ENCODE measurements at regions of chr5 and their contacts with region 1.

Region 1: DNA sequence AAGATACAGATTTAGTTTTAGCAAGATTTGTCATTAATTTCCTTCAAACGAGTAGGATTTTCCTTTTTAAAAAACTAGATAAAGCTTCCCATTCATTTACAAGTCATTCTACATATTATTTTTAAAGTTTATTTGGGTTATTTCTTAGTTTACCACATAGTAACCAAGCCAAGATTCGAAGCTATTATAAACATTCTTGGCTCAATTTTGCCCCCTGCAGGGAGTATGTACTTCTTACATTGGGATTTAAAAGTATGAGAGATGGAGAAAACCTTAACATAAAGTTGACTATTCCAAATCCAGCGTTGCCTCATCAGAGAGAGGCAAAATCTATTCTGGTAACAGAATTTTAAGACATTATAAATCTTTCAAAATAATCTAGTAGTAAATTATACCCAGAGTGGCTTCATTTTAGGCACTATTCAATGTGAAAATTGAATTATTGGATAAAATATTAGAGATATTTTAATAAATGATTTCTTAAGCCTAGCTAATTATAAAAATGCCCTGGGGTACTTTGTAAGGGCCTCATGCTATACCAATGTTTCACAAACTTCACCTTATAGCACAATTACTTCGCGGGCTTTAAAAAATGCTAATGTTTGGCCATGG is 39.1 kb downstream of the FBN2 start:
- DNase-seq: peak; percentile 54
- H3K4me3 ChIP-seq: no peak overlapping the region
- H3K27ac ChIP-seq: no peak overlapping the region
- H3K27me3 ChIP-seq: no peaks in the 10 kb centered on the region
- CTCF ChIP-seq: peak; percentile 53

Region 2: DNA sequence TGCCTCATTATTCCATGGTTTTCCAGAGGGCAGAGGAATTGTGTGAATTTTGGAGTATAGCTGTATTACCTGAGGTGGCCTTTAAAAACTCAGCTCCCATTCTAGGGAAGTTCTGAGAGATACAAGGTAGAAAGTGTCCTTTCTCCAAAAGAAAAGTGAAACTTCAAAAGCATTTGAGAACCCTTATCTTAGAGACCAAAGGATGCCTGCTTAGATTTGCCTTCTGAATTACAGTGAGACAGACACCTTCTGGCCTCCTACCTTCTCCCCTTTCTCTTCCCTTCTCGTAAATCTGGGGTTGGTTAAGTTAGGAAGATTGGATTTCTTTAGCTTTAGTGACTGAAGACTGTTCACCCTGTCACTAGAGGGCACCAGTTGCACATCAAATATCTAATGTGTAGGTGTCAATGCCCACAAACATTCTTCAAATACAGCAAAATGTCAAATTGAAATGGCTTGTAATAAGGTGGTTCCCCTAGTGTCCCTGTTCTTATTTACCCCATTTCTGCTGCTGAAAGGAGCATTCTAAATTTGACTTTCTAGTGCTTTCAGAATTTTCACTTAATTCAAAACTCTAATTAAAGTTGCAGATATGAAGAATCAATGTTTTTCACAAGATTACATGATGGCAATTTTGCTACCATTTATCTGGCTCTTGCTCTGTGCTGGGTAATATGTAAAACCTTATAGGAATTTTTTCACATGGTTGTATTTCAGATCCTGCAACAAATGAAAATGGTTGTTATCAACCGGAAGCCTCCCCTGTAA is 934.8 kb before region 1 on chr5:
- CTCF ChIA-PET with region 1: interaction called, 10 read pairs
- POLR2A ChIA-PET with region 1: no interaction called
- DNase-seq: peak; percentile 18
- H3K4me3 ChIP-seq: no peak overlapping the region
- H3K27ac ChIP-seq: no peak overlapping the region
- H3K27me3 ChIP-seq: peaks cover 9% of the 10 kb centered on the region
- CTCF ChIP-seq: peak; percentile 59

Region 3: DNA sequence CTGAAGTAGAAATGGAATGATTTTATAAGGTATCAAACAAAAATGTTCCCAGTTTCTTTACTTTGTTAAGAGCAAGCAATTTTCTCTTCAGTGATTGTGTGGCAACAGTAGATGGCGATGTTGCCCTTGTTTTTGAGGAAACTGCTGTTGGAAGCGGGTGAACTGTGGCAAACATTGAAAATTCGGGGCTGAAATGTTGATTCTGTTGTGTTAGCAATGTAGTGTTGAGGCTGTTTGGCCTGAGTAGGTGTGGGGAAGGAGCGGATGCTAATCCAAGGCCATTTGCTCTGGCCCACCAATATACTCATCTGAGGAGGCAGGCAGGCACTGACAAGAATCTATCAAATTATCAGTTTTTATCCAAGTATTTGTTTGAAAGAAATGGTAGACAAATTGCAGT is 285.6 kb before region 1 on chr5:
- CTCF ChIA-PET with region 1: interaction called, 80 read pairs
- POLR2A ChIA-PET with region 1: no interaction called
- DNase-seq: no peak
- H3K4me3 ChIP-seq: no peak overlapping the region
- H3K27ac ChIP-seq: no peak overlapping the region
- H3K27me3 ChIP-seq: peaks cover 3% of the 10 kb centered on the region
- CTCF ChIP-seq: peak; percentile 80

Region 4: DNA sequence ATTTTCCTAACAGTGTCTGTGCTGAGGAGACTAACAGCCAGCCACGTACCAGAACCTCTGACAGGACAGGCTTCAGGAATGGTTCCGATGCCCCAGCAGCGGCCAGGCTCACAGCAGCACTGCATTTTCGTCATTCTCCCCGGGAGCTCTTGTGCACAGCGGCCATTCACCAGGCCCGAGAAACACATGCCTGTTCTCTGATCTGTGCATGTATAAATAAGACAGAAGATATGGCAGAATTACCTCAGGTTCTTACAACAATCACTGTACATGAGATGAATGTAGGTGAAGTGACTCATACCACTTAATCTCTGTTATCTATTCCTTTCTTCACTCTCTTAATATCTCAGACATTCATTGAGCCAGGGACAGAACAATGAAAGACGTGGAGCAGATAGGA is 103.9 kb before region 1 on chr5:
- CTCF ChIA-PET with region 1: no interaction called
- POLR2A ChIA-PET with region 1: no interaction called
- DNase-seq: no peak
- H3K4me3 ChIP-seq: no peak overlapping the region
- H3K27ac ChIP-seq: no peak overlapping the region
- H3K27me3 ChIP-seq: no peaks in the 10 kb centered on the region
- CTCF ChIP-seq: no peak

Region 5: DNA sequence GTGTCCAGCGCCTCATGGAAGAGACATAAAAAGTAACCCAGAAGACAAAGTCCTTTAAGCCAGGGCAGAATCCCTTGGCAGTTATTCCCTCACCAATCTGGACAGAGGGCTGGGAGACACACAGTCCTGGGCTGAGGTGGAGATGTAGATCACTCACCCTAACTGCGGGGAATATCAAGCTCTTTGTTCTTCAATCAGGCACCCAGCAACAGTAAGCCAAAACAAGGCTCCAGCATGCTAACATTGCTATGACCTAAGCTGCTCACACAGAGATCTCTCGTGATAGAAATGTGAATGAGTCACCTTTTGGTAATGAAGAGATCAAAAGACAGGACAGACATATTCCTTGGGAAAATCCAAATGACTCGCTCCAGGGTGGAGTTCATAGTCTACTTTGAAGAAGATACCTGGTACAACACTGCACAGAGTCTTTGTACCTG is 62.2 kb before region 1 on chr5:
- CTCF ChIA-PET with region 1: no interaction called
- POLR2A ChIA-PET with region 1: no interaction called
- DNase-seq: peak; percentile 24
- H3K4me3 ChIP-seq: no peak overlapping the region
- H3K27ac ChIP-seq: no peak overlapping the region
- H3K27me3 ChIP-seq: no peaks in the 10 kb centered on the region
- CTCF ChIP-seq: no peak

Region 6: GRCh38 chr5:128480906-128481633 is 17.9 kb before region 1 on chr5:
- CTCF ChIA-PET with region 1: interaction called, 13 read pairs
- POLR2A ChIA-PET with region 1: no interaction called
- DNase-seq: no peak
- H3K4me3 ChIP-seq: no peak overlapping the region
- H3K27ac ChIP-seq: no peak overlapping the region
- H3K27me3 ChIP-seq: no peaks in the 10 kb centered on the region
- CTCF ChIP-seq: no peak

Region 7: DNA sequence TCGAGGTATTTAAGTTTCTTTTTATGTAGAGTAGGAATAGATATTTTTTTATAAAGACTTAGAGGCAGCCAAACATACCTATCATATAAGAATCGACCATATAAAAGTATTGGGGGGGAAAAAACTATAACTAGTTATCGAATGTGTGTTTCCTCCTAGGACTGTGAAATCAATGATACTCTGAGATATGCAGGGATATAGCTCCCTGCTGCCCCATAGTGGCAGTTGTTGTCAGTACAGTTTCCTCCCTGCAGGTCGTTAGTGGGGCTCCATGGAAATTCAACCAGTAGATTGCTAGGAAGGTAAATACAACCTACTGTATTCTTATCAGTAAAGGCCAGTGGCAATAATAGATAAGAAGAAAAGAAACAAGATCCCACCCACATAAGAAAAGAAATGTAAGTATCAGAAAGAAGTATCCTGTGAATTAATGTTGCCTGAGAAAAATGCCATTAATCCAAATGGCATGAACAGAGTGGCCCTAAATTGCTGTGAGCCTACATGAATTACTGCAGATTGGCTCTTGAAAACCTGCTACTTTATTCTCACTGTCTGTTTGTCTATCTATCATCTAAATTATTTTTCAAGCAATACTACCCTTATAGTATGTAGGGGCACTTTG is 176.0 kb after region 1 on chr5:
- CTCF ChIA-PET with region 1: interaction called, 14 read pairs
- POLR2A ChIA-PET with region 1: no interaction called
- DNase-seq: peak; percentile 24
- H3K4me3 ChIP-seq: no peak overlapping the region
- H3K27ac ChIP-seq: no peak overlapping the region
- H3K27me3 ChIP-seq: no peaks in the 10 kb centered on the region
- CTCF ChIP-seq: peak; percentile 85

Region 8: GRCh38 chr5:129412721-129413120 is 913.8 kb after region 1 on chr5:
- CTCF ChIA-PET with region 1: interaction called, 12 read pairs
- POLR2A ChIA-PET with region 1: no interaction called
- DNase-seq: no peak
- H3K4me3 ChIP-seq: no peak overlapping the region
- H3K27ac ChIP-seq: no peak overlapping the region
- H3K27me3 ChIP-seq: no peaks in the 10 kb centered on the region
- CTCF ChIP-seq: no peak